Naive thymus-derived CD4-positive, alpha-beta T cell (primary cell): ENCODE measurements at regions of chr9 and their contacts with region 1.

Region 1: GRCh38 chr9:131478421-131478868 is 24.3 kb upstream of the POMT1 start:
- DNase-seq: peak; percentile 19 to 65 (median 51)
- ATAC-seq: peak; percentile 61
- H3K4me3 ChIP-seq: no peak overlapping the region
- H3K4me3 Mint-ChIP-seq: no peak overlapping the region
- H3K27ac ChIP-seq: no peak overlapping the region
- H3K27ac Mint-ChIP-seq: peak overlapping the region in 6 of 9 donors; percentile 11 to 87 (median 64)
- H3K4me1 ChIP-seq: no peaks in the 10 kb centered on the region
- H3K4me1 Mint-ChIP-seq: peaks cover 0 to 8% (median 3%) of the 10 kb centered on the region in 7 donors
- H3K27me3 ChIP-seq: no peaks in the 10 kb centered on the region
- H3K27me3 Mint-ChIP-seq: no peaks in the 10 kb centered on the region

Region 2: GRCh38 chr9:131349881-131350563 is 128.4 kb before region 1 on chr9:
- CTCF ChIA-PET with region 1: interaction called, 45 read pairs
- POLR2A ChIA-PET with region 1: no interaction called
- intact Hi-C with region 1: loop called (anchors 1 kb)
- DNase-seq: peak; percentile 74 to 87 (median 82)
- ATAC-seq: peak; percentile 99
- H3K4me3 ChIP-seq: no peak overlapping the region
- H3K4me3 Mint-ChIP-seq: peak overlapping the region in 8 of 10 donors; percentile 12 to 80 (median 57)
- H3K27ac ChIP-seq: no peak overlapping the region
- H3K27ac Mint-ChIP-seq: peak overlapping the region in 5 of 9 donors; percentile 65 to 78 (median 70)
- H3K4me1 ChIP-seq: peaks cover 4 to 9% of the 10 kb centered on the region in 2 donors
- H3K4me1 Mint-ChIP-seq: peaks cover 0 to 15% (median 8%) of the 10 kb centered on the region in 7 donors
- H3K27me3 ChIP-seq: no peaks in the 10 kb centered on the region
- H3K27me3 Mint-ChIP-seq: peaks cover 0 to 5% (median 0%) of the 10 kb centered on the region in 5 donors

Region 3: GRCh38 chr9:131386281-131386680 is 92.2 kb before region 1 on chr9:
- CTCF ChIA-PET with region 1: interaction called, 3 read pairs
- POLR2A ChIA-PET with region 1: no interaction called
- intact Hi-C with region 1: loop called in 1 of 2 experiments (anchors 1 kb)
- DNase-seq: no peak
- ATAC-seq: no peak
- H3K4me3 ChIP-seq: no peak overlapping the region
- H3K4me3 Mint-ChIP-seq: no peak overlapping the region
- H3K27ac ChIP-seq: no peak overlapping the region
- H3K27ac Mint-ChIP-seq: peak overlapping the region in 1 of 9 donors; percentile 21
- H3K4me1 ChIP-seq: no peaks in the 10 kb centered on the region
- H3K4me1 Mint-ChIP-seq: peaks cover 0 to 12% (median 1%) of the 10 kb centered on the region in 7 donors
- H3K27me3 ChIP-seq: no peaks in the 10 kb centered on the region
- H3K27me3 Mint-ChIP-seq: peaks cover 0 to 2% (median 0%) of the 10 kb centered on the region in 5 donors

Region 4: DNA sequence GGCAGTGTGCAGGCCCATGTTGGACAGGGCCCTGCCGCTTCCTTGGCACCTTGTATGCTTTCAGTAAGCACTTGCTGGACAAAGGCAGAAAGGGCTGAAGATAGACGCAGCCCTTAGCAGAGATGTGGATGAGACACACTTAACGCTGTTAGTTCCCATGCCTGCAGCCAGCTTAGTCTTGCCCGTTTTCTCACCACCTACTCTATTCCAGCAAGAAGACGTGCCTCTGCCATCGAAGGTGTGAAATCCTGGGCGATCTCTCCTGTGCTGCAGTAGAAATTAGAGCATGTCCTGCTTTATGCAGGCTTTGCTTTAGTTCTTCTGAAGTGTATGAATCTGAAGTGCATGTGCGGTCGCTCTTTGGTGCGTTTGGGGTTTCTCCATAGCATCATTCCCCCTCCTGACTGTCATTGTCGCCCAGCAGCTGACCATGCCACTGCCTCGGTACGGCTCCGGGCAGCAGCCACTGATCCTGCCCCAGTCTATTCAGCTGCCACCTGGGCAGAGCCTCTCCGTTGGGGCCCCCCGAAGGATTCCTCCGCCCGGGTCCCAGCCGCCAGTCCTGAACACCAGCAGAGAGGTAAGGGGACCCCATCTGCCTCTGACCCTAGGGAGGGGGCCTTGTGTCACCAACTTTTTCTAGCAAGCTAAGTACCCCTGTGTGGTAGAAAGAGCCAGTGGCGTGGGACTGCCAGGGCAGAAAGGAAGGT is 12.7 kb after region 1 on chr9:
- CTCF ChIA-PET with region 1: no interaction called
- POLR2A ChIA-PET with region 1: no interaction called
- intact Hi-C with region 1: no loop called
- DNase-seq: no peak
- ATAC-seq: no peak
- H3K4me3 ChIP-seq: no peak overlapping the region
- H3K4me3 Mint-ChIP-seq: no peak overlapping the region
- H3K27ac ChIP-seq: no peak overlapping the region
- H3K27ac Mint-ChIP-seq: peak overlapping the region in 2 of 9 donors; percentile 58 to 80
- H3K4me1 ChIP-seq: no peaks in the 10 kb centered on the region
- H3K4me1 Mint-ChIP-seq: peaks cover 0 to 16% (median 11%) of the 10 kb centered on the region in 7 donors
- H3K27me3 ChIP-seq: no peaks in the 10 kb centered on the region
- H3K27me3 Mint-ChIP-seq: no peaks in the 10 kb centered on the region